Psoas muscle (tissue), 8 donors: ENCODE measurements at regions of chr13 and their contacts with region 1.

Region 1: DNA sequence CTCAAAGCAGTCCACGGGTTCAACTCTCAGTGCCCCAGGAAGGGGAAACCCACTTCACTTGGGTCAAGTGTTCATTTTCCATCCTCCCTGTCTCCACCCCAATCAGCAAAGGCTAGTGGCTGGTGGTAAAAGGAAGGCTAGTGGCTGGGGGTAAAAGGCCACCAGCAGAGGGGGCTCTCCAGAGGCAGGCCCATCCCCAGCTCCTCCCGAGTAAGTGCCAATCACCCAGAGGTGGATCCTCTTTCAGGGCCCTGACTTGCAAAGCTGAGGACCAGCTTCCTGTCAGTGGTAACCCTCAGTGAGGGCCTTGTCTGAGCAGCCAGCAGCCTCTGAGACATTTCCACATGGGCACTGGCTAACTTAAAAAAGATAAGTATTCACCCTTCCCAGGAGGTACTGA is 22.0 kb upstream of the TPT1 start:
- DNase-seq: no peak
- ATAC-seq: peak in 2 of 4 donors; percentile 18 to 39
- H3K4me3 ChIP-seq: no peak overlapping the region
- H3K27ac ChIP-seq: no peak overlapping the region
- H3K4me1 ChIP-seq: peaks cover 8% of the 10 kb centered on the region
- H3K27me3 ChIP-seq: no peaks in the 10 kb centered on the region
- CTCF ChIP-seq: no peak

Region 2: GRCh38 chr13:45396533-45397095 is 33.7 kb after region 1 on chr13:
- intact Hi-C with region 1: loop called in 1 of 2 experiments (anchors 5 kb)
- DNase-seq: no peak
- ATAC-seq: no peak
- H3K4me3 ChIP-seq: no peak overlapping the region
- H3K27ac ChIP-seq: peak overlapping the region; percentile 79
- H3K4me1 ChIP-seq: peaks cover 47% of the 10 kb centered on the region
- H3K27me3 ChIP-seq: no peaks in the 10 kb centered on the region
- CTCF ChIP-seq: no peak